Endothelial cell of umbilical vein (primary cell): ENCODE measurements at regions of chr2 and their contacts with region 1.

Region 1: GRCh38 chr2:219294356-219295351 is 14.5 kb downstream of the PTPRN start:
- DNase-seq: peak; percentile 87
- H3K4me3 ChIP-seq: peak overlapping the region; percentile 40 to 46 (median 40)
- H3K27ac ChIP-seq: no peak overlapping the region
- H3K4me1 ChIP-seq: peaks cover 4% of the 10 kb centered on the region
- H3K27me3 ChIP-seq: peaks cover 0 to 2% of the 10 kb centered on the region in 2 experiments
- CTCF ChIP-seq: peak; percentile 95 to 98
- POLR2A ChIP-seq: peak; percentile 64

Region 2: DNA sequence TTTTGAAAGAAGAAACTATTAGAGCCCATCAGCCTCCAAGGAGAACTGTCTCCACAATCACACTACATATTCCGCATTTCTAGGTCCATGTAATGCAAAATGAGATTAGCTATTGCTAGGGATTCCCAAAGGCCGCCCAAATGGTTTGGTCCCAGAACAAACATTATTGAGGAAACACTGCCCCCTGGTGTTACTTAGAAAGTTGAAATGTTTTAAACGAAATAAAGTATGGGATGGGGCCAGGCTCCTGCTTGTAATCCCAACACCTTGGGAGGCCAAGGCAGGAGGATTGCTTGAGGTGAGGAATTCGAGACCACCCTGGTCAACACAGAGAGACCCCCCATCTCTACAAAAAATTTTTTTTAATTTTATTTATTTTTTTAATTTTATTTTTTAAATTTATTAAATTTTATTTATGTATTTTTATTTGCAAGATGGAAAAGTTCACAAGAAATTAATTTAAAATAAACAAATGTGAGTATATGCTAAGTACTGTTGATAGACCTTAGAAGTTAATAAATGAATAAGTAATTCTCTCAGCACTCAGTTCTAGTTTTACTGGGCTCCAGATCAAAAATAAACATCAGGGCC is 139.5 kb before region 1 on chr2:
- CTCF ChIA-PET with region 1: interaction called, 26 read pairs
- POLR2A ChIA-PET with region 1: no interaction called
- dilution Hi-C with region 1: no loop called
- intact Hi-C with region 1: loop called (anchors 1 kb)
- DNase-seq: peak; percentile 61
- H3K4me3 ChIP-seq: no peak overlapping the region
- H3K27ac ChIP-seq: no peak overlapping the region
- H3K4me1 ChIP-seq: peaks cover 6% of the 10 kb centered on the region
- H3K27me3 ChIP-seq: no peaks in the 10 kb centered on the region
- CTCF ChIP-seq: peak; percentile 28 to 36
- POLR2A ChIP-seq: no peak

Region 3: DNA sequence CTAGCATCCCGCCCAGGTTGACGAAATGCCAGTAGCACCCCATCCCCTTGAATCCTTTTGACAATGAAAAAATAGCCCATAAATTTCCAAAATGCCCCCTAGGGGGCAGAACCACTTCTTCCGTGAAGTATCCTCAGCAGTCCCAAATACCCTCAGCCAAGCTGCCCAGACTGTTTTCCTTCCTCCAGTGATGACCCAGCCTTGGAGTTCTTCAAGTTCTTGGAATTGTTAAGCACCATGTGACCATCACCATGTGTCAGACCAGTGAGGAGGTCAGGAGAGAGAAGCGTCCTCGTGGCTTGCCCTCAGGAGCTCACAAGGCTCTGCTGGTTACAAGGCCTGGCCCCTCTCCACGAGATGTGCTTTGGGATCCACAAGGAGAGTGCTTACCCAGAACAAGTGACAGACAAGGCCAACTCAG is 123.4 kb before region 1 on chr2:
- CTCF ChIA-PET with region 1: interaction called, 32 read pairs
- POLR2A ChIA-PET with region 1: no interaction called
- dilution Hi-C with region 1: no loop called
- intact Hi-C with region 1: loop called (anchors 1 kb)
- DNase-seq: peak; percentile 76
- H3K4me3 ChIP-seq: no peak overlapping the region
- H3K27ac ChIP-seq: no peak overlapping the region
- H3K4me1 ChIP-seq: no peaks in the 10 kb centered on the region
- H3K27me3 ChIP-seq: no peaks in the 10 kb centered on the region
- CTCF ChIP-seq: peak; percentile 69 to 83
- POLR2A ChIP-seq: no peak

Region 4: GRCh38 chr2:219218732-219219701 is 75.6 kb before region 1 on chr2 and contains the start of gene ABCB6:
- CTCF ChIA-PET with region 1: interaction called, 12 read pairs
- POLR2A ChIA-PET with region 1: no interaction called
- dilution Hi-C with region 1: no loop called
- intact Hi-C with region 1: loop called (anchors 2 kb)
- DNase-seq: peak; percentile 93
- H3K4me3 ChIP-seq: peak within 1 kb of the TSS; percentile 20 to 55 (median 46)
- H3K27ac ChIP-seq: peak within 1 kb of the TSS; percentile 82
- H3K4me1 ChIP-seq: peaks cover 14% of the 10 kb centered on the region
- H3K27me3 ChIP-seq: no peaks in the 10 kb centered on the region
- CTCF ChIP-seq: no peak
- POLR2A ChIP-seq: peak; percentile 83
- total RNA-seq, gene ABCB6: 26.6 and 32.5 TPM in 2 replicates

Region 5: GRCh38 chr2:219245148-219245898 is 49.3 kb before region 1 on chr2 and contains the starts of genes GLB1L and STK16:
- CTCF ChIA-PET with region 1: interaction called, 25 read pairs
- POLR2A ChIA-PET with region 1: interaction called, 4 read pairs
- dilution Hi-C with region 1: no loop called
- intact Hi-C with region 1: loop called (anchors 1 kb)
- DNase-seq: peak; percentile 91
- H3K4me3 ChIP-seq: peak within 1 kb of the TSS; percentile 67 to 80 (median 67)
- H3K27ac ChIP-seq: peak within 1 kb of the TSS; percentile 92
- H3K4me1 ChIP-seq: peaks cover 28% of the 10 kb centered on the region
- H3K27me3 ChIP-seq: no peaks in the 10 kb centered on the region
- CTCF ChIP-seq: no peak
- POLR2A ChIP-seq: peak; percentile 93
- total RNA-seq, gene GLB1L: 9.2 and 9.5 TPM in 2 replicates
- total RNA-seq, gene STK16: 18.8 and 21.1 TPM in 2 replicates

Region 6: DNA sequence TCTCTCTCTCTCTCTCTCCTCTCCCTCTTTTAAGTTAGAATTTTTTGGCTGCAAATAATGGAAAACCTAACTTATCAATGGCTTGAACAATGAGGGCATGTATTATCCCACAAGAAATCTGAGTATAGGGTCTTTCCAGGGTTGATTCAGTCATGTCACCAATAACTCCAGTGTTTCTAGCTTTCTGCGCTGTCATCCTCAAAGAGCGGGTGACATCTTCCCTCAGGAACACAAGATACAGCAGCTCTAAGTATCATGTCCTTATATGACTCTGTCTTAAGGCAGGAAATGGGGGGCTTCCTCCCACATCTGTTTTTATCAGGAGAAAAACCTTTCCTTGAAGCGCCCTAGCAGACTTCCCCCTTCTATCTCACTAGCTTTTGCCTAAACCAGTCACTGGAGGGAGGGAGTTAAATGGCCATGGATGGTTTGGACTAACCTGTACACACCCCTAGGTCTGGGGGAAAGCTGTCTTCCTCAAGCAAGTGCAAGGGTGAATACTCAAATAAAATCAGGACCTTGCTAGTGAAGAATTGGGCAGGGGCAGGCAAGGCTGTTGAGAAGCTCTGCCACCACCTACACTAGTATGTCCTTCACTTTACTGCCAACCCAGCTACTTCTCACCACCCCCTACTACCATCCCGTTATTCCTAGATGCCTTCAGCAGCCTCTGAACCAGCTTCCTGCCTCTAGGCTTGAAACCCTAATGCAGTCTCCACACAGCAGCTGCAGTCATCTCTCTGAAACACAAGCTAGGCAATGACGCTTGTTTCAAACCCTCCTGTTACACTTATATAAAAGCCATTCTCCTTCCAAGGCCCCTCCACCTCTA is 33.4 kb before region 1 on chr2:
- CTCF ChIA-PET with region 1: interaction called, 12 read pairs
- POLR2A ChIA-PET with region 1: no interaction called
- dilution Hi-C with region 1: no loop called
- intact Hi-C with region 1: no loop called
- DNase-seq: no peak
- H3K4me3 ChIP-seq: no peak overlapping the region
- H3K27ac ChIP-seq: no peak overlapping the region
- H3K4me1 ChIP-seq: no peaks in the 10 kb centered on the region
- H3K27me3 ChIP-seq: peaks cover 18 to 19% of the 10 kb centered on the region in 2 experiments
- CTCF ChIP-seq: no peak
- POLR2A ChIP-seq: no peak

Region 7: DNA sequence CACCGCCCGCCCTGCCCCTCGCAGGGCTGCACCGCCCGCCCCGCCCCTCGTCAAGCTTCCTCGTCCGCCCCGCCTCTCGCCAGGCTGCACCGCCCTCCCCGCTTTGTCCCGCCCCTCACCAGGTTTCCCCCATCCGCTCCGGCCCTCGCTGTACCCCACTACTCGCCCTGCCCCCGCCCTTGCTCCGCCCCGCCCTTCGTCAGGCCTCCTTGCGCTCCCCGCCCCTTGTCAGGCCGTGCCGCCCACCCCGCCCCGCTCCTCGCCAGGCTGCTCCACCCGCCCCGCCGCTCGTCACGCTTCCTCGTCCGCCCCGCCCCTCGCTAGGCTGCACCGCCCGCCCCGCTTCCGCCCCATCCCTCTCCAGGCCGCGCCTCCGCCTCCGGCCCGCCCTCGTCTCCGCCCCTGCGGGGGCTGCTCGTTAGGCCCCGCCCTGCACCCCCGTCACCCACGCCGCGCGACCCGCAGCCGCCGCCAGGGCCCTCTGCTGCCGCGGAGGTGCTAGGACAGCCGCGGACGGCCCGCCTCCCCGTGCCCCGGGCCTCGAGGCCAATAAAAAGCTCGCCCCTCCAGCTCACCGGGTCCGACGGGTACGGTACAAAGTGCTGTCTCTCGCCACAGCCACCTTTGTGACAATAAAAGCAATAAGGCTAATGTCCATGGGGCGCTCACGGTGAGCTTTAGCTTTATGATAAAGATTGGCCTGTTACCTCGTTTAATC is 93.6 kb after region 1 on chr2:
- CTCF ChIA-PET with region 1: no interaction called
- POLR2A ChIA-PET with region 1: no interaction called
- dilution Hi-C with region 1: no loop called
- intact Hi-C with region 1: loop called (anchors 5 kb)
- DNase-seq: peak; percentile 96
- H3K4me3 ChIP-seq: peak overlapping the region in 2 of 3 experiments; percentile 46 to 55
- H3K27ac ChIP-seq: no peak overlapping the region
- H3K4me1 ChIP-seq: peaks cover 9% of the 10 kb centered on the region
- H3K27me3 ChIP-seq: peaks cover 2% of the 10 kb centered on the region in 2 experiments
- CTCF ChIP-seq: peak; percentile 47 to 56
- POLR2A ChIP-seq: no peak

Region 8: GRCh38 chr2:219744600-219744999 is 449.9 kb after region 1 on chr2:
- CTCF ChIA-PET with region 1: no interaction called
- POLR2A ChIA-PET with region 1: no interaction called
- dilution Hi-C with region 1: no loop called
- intact Hi-C with region 1: no loop called
- DNase-seq: no peak
- H3K4me3 ChIP-seq: no peak overlapping the region
- H3K27ac ChIP-seq: no peak overlapping the region
- H3K4me1 ChIP-seq: no peaks in the 10 kb centered on the region
- H3K27me3 ChIP-seq: no peaks in the 10 kb centered on the region
- CTCF ChIP-seq: no peak
- POLR2A ChIP-seq: no peak